OCI-LY7 (cell line): ENCODE measurements at regions of chr10 and their contacts with region 1.

Region 1: GRCh38 chr10:62653254-62653653 is 151.3 kb upstream of the ADO start:
- DNase-seq: peak; percentile 99
- H3K4me3 ChIP-seq: peak overlapping the region; percentile 42
- H3K27ac ChIP-seq: peak overlapping the region; percentile 96
- H3K4me1 ChIP-seq: peaks cover 74% of the 10 kb centered on the region
- CTCF ChIP-seq: no peak

Region 2: DNA sequence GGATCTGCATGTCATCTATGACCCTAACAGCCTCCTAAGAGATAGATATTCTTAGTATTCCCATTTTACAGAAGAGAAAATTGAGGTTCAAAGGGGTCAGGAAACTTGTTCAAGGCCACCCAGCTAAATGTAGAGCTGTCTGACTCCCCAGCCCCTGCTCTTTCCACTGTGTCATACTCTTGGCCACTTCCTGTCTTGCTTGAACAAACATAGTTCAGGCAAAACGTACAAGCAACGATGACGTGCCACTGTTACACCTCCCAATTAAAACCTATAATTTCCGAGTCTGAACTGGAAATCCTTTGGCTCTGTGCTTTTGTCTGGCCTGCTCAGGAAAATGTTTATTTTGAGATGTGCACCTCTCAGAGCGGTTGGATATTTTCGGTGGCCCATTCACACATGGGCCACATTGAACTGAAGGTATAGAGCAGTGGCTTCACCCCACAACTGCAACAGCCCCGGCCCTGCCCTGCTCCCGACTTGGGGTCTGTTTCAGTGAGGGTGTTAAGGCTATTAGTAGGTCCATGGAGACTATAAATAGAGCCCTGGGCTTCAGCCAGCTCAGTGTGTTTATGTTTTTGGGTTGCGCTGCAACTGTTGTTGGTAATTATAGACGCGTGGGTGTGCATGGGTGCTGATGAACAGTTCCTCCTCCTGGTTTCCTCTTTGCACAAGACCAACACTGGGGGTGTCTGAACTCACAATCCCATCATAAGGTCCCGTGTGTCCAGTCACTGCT is 21.0 kb before region 1 on chr10:
- CTCF ChIA-PET with region 1: interaction called, 15 read pairs
- POLR2A ChIA-PET with region 1: interaction called, 80 read pairs
- intact Hi-C with region 1: loop called (anchors 1 kb)
- DNase-seq: peak; percentile 85
- H3K4me3 ChIP-seq: peak overlapping the region; percentile 23
- H3K27ac ChIP-seq: peak overlapping the region; percentile 77
- H3K4me1 ChIP-seq: peaks cover 79% of the 10 kb centered on the region
- CTCF ChIP-seq: no peak; the same call in 1 of the 2 replicates

Region 3: GRCh38 chr10:62637249-62638061 is 15.8 kb before region 1 on chr10:
- CTCF ChIA-PET with region 1: interaction called, 15 read pairs
- POLR2A ChIA-PET with region 1: interaction called, 80 read pairs
- intact Hi-C with region 1: loop called (anchors 1 kb)
- DNase-seq: peak; percentile 82
- H3K4me3 ChIP-seq: peak overlapping the region; percentile 63
- H3K27ac ChIP-seq: peak overlapping the region; percentile 90
- H3K4me1 ChIP-seq: peaks cover 87% of the 10 kb centered on the region
- CTCF ChIP-seq: no peak

Region 4: DNA sequence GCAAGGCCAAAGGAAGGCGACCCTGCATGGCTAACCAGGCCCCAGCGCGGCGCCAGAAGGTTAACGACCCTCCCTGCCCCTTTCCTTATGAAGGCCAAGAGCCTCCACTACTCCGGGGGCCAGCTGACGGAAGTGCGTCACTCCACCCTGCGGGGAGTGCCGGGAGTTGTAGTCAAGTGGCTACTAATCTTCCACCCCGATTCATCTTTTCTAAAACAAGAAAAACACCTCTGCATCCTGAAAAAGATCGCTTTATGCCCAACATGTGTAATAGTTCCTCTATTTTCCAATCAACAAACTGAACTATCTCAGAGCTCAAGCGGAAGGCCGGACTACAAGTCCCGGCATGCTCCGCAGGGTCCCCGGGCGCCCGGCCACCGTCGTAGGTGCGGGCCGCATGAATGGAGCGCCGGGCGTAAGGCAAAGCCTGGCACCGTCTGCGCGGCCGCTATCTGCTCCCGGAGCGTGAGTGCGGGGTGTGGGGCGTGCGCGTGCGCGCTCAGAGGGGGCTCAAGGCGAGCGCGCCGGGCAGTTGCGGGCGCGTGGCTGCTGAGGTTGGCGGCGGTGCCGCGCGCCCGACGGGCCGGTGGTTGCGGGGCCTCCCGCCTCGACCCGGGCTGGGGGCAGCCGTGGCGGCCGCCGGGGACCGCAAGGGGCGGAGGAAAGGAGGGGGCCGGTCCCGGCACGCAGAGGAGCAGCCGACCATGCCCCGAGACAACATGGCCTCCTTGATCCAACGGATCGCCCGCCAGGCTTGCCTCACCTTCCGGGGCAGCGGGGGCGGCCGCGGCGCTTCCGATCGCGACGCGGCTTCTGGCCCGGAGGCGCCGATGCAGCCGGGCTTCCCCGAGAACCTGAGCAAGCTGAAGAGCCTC is 151.3 kb after region 1 on chr10 and contains the start of gene ADO:
- CTCF ChIA-PET with region 1: no interaction called
- POLR2A ChIA-PET with region 1: interaction called, 3 read pairs
- intact Hi-C with region 1: loop called (anchors 1 kb)
- DNase-seq: peak; percentile 89
- H3K4me3 ChIP-seq: peak within 1 kb of the TSS; percentile 88
- H3K27ac ChIP-seq: peak within 1 kb of the TSS; percentile 66
- H3K4me1 ChIP-seq: peaks cover 39% of the 10 kb centered on the region
- CTCF ChIP-seq: no peak
- total RNA-seq, gene ADO: 33.1 and 43.1 TPM in 2 replicates